Posterior vena cava (tissue), 2 donors: ENCODE measurements at regions of chr11 and their contacts with region 1.

Region 1: GRCh38 chr11:55263081-55263480 is 1.1 kb downstream of the TRIM48 start:
- DNase-seq: no peak

Region 2: DNA sequence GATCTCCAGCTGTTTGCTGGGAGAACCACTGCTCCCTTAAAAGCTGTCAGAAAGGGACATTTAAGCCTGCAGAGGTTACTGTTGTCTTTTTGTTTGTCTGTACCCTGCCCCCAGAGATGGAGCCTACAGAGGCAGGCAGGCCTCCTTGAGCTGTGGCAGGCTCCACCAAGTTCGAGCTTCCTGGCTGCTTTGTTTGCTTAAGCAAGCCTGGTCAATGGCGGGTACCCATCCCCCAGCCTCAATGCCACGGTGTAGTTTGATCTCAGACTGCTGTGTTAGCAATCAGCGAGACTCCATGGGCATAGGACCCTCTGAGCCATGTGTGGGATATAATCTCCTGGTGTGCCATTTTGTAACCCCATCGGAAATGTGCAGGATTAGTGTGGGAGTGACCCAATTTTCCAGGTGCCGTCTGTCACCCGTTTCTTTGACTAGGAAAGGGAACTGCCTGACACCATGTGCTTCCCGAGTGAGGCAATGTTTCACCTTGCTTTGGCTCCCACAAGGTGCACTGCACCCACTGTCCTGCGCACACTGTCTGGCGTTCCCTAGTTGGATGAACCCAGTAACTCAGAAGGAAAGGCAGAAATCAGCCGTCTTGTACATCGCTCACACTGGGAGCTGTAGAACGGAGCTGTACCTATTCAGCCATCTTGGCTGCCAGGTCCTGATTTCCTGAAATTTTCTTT is 24.6 kb before region 1 on chr11:
- intact Hi-C with region 1: loop called in 1 of 2 experiments (anchors 2 kb)
- DNase-seq: peak; percentile 61

Region 3: GRCh38 chr11:55324500-55324899 is 61.4 kb after region 1 on chr11:
- intact Hi-C with region 1: no loop called
- DNase-seq: no peak

Region 4: GRCh38 chr11:55457641-55458040 is 194.6 kb after region 1 on chr11:
- intact Hi-C with region 1: no loop called
- DNase-seq: no peak

Region 5: DNA sequence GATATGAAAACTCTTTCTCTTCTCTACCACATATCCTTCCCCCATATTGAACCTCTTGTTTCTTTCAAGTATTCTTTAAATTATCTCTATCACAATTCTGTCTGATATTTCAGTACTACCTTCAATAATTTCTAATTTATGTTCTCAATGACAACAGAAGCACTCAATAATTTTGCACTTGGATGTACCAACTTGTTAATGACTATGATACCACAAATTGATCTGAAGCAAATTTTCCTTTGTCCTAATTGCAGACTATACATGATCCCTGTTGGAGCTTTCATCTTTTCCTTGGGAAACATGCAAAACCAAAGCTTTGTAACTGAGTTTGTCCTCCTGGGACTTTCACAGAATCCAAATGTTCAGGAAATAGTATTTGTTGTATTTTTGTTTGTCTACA is 291.1 kb after region 1 on chr11 and contains the start of gene OR4C15:
- intact Hi-C with region 1: no loop called
- DNase-seq: no peak
- total RNA-seq, gene OR4C15: not detected

Region 6: DNA sequence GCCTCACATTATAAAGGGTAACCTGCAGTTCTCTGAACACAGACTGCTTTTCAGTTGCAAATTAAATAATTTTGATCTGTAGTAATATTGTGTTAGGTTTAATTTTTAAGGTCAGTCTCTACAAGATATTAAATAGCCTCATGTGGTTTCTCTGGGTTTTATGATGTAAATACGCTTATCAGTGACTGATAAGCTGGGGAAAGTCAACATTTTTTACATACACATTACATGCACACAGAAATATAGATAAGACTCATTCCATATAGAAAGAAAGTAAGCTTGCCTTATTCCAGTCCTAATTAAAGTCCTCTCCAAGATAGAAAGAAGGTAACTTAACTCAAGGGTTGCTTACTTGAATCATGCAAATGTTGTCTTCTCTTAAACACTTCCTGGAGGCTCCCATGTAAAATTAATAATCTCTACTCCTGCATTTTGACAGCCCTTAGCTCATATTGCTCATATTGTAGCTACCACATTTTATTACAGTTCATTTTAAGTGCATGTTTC is 1211.7 kb after region 1 on chr11:
- intact Hi-C with region 1: no loop called
- DNase-seq: no peak